ENCODE measurements at regions of chr15 and their contacts with region 1.

Region 1: DNA sequence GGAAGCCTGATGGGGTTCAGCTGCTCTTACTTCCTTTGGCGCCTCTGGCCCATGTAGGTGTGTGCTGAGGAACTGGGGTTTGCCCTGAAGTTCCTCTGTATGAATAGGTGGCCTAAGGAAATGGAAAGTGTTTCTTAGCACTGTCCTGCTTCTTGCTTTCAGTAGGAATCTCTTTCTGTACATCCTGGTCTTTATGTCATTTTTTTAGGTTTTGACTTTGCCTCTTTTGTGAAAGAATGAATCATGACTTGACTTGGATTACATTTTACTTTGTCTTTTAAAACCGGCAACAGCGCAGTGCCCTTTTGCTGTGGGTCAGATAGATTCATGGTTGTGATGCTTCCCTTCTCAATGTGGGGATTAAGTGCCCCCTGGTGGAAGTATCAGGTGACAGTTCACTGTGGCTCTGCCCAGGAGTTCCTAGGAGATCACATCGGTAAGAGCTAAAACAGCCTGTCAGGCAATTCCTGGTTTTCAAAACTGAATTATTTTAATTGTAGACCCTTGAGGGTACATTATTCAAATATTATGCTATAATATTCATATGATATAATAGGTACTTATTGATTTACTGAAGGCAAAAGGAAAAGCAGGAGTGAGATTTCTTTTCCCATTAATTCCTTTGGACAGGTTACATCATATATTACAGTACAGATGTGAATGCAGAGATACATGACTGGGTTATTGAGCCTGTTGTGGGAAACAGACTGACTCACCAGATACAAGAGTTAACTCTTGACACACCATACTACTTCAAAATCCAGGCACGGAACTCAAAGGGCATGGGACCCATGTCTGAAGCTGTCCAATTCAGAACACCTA is 95.4 kb downstream of the HCN4 start:
- DNase-seq: no peak

Region 2: GRCh38 chr15:72783563-72784237 is 489.7 kb before region 1 on chr15 and contains the start of gene ADPGK:
- intact Hi-C with region 1: loop called (anchors 5 kb)
- DNase-seq: peak; percentile 94
- total RNA-seq, gene ADPGK: 11.1 TPM

Region 3: GRCh38 chr15:73239564-73240215 is 33.7 kb before region 1 on chr15:
- intact Hi-C with region 1: loop called (anchors 5 kb)
- DNase-seq: no peak

Region 4: DNA sequence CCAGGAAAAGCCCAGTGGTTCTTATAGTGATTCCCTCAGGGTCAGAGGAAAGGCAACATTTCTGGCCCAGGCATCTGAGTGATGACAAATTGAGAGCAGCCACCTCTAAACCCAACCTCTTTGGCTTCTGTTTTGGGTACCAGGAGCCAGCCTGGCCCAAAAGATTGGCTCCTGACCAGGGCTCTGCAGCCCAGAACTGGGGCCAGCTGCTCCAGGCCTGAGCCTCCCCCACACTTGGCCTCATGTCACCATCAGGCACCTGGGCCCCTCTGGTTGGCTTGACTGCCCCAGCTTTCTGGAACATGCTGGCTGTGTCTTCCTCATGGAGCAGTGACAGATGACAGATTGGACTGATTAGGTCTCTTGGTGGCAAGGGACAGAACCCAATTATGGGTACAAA is 121.4 kb after region 1 on chr15:
- intact Hi-C with region 1: no loop called
- DNase-seq: peak; percentile 82

Region 5: GRCh38 chr15:73485372-73485771 is 212.0 kb after region 1 on chr15:
- intact Hi-C with region 1: no loop called
- DNase-seq: no peak